Activated CD8-positive, alpha-beta T cell treated with anti-CD3 and anti-CD28 coated beads for 36 hours (primary cell): ENCODE measurements at regions of chr22 and their contacts with region 1.

Region 1: GRCh38 chr22:36065775-36066559 is 37.3 kb upstream of the RBFOX2 start:
- DNase-seq: peak; percentile 85
- ATAC-seq: peak; percentile 89
- H3K4me3 Mint-ChIP-seq: peak overlapping the region; percentile 67
- H3K27ac Mint-ChIP-seq: peak overlapping the region; percentile 89
- H3K4me1 Mint-ChIP-seq: peaks cover 8% of the 10 kb centered on the region
- H3K27me3 Mint-ChIP-seq: peaks cover 1% of the 10 kb centered on the region
- CTCF ChIP-seq: peak; percentile 100

Region 2: GRCh38 chr22:35921777-35922176 is 144.2 kb before region 1 on chr22:
- CTCF ChIA-PET with region 1: interaction called, 15 read pairs
- POLR2A ChIA-PET with region 1: interaction called, 5 read pairs
- intact Hi-C with region 1: no loop called
- DNase-seq: peak; percentile 61
- ATAC-seq: peak; percentile 80
- H3K4me3 Mint-ChIP-seq: no peak overlapping the region
- H3K27ac Mint-ChIP-seq: no peak overlapping the region
- H3K4me1 Mint-ChIP-seq: peaks cover 5% of the 10 kb centered on the region
- H3K27me3 Mint-ChIP-seq: no peaks in the 10 kb centered on the region
- CTCF ChIP-seq: peak; percentile 60

Region 3: GRCh38 chr22:36017651-36018091 is 48.3 kb before region 1 on chr22:
- CTCF ChIA-PET with region 1: interaction called, 19 read pairs
- POLR2A ChIA-PET with region 1: no interaction called
- intact Hi-C with region 1: no loop called
- DNase-seq: no peak
- ATAC-seq: no peak
- H3K4me3 Mint-ChIP-seq: no peak overlapping the region
- H3K27ac Mint-ChIP-seq: no peak overlapping the region
- H3K4me1 Mint-ChIP-seq: peaks cover 10% of the 10 kb centered on the region
- H3K27me3 Mint-ChIP-seq: peaks cover 4% of the 10 kb centered on the region
- CTCF ChIP-seq: no peak

Region 4: GRCh38 chr22:36052505-36053270 is 13.3 kb before region 1 on chr22:
- CTCF ChIA-PET with region 1: interaction called, 67 read pairs
- POLR2A ChIA-PET with region 1: no interaction called
- intact Hi-C with region 1: no loop called
- DNase-seq: peak; percentile 15
- ATAC-seq: peak; percentile 84
- H3K4me3 Mint-ChIP-seq: no peak overlapping the region
- H3K27ac Mint-ChIP-seq: no peak overlapping the region
- H3K4me1 Mint-ChIP-seq: peaks cover 5% of the 10 kb centered on the region
- H3K27me3 Mint-ChIP-seq: peaks cover 9% of the 10 kb centered on the region
- CTCF ChIP-seq: no peak

Region 5: GRCh38 chr22:36097880-36098279 is 31.9 kb after region 1 on chr22:
- CTCF ChIA-PET with region 1: interaction called, 16 read pairs
- POLR2A ChIA-PET with region 1: no interaction called
- intact Hi-C with region 1: no loop called
- DNase-seq: no peak
- ATAC-seq: no peak
- H3K4me3 Mint-ChIP-seq: no peak overlapping the region
- H3K27ac Mint-ChIP-seq: no peak overlapping the region
- H3K4me1 Mint-ChIP-seq: no peaks in the 10 kb centered on the region
- H3K27me3 Mint-ChIP-seq: peaks cover under 1% of the 10 kb centered on the region
- CTCF ChIP-seq: no peak

Region 6: GRCh38 chr22:36129486-36130388 is 63.8 kb after region 1 on chr22:
- CTCF ChIA-PET with region 1: interaction called, 38 read pairs
- POLR2A ChIA-PET with region 1: no interaction called
- intact Hi-C with region 1: no loop called
- DNase-seq: no peak
- ATAC-seq: no peak
- H3K4me3 Mint-ChIP-seq: no peak overlapping the region
- H3K27ac Mint-ChIP-seq: no peak overlapping the region
- H3K4me1 Mint-ChIP-seq: peaks cover 14% of the 10 kb centered on the region
- H3K27me3 Mint-ChIP-seq: no peaks in the 10 kb centered on the region
- CTCF ChIP-seq: no peak

Region 7: DNA sequence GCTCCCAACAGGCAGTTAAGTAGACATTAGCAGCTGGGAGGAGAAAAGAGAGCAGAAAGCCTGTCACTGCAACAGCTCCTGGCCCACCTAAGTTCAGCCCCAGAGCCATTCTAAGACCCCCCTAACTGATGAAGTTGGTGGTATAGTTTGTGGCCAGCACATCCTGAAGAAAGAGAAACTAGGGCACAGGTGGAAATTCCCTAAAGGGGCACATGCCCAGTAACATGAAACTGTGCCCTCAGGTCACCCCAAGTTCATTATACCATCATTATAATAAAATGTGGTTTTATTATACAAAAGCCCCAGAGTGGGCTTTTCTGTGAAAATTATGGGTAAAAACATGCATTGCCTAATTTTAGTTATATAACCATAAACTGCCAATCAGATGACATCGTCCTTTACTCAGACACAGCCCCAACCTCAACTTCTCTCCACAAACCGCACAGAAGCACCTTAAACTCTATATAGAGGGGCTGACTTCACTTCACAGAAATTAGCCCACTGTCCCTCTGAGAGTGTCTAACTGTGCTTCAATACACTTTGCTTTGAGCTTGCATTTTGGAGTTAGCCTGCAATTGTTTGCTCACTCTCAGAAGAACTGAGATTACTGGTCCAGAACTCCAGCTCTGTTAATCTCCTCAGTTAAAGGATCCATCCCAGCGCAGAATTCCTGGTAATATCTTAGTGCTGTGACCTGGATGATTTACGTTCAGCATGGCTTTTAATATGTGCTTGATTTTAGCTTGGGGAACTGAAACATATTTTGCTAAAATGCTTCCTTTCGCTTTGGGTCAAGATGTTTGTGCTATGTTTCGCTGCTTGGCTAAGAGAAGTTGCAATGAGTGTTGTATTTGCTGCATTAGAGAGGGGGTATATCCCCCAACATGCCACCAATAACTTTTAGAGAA is 96.4 kb after region 1 on chr22:
- CTCF ChIA-PET with region 1: interaction called, 22 read pairs
- POLR2A ChIA-PET with region 1: no interaction called
- intact Hi-C with region 1: no loop called
- DNase-seq: peak; percentile 83
- ATAC-seq: peak; percentile 61
- H3K4me3 Mint-ChIP-seq: peak overlapping the region; percentile 89
- H3K27ac Mint-ChIP-seq: peak overlapping the region; percentile 99
- H3K4me1 Mint-ChIP-seq: peaks cover 89% of the 10 kb centered on the region
- H3K27me3 Mint-ChIP-seq: no peaks in the 10 kb centered on the region
- CTCF ChIP-seq: no peak